ENCODE measurements at regions of chr14 and their contacts with region 1.

Region 1: GRCh38 chr14:61503167-61503801 is 181.9 kb downstream of the PRKCH start:
- DNase-seq: peak in 9 of 10 donors; percentile 38 to 83 (median 70)
- ATAC-seq: peak; percentile 85 to 90
- H3K4me3 Mint-ChIP-seq: peak overlapping the region; percentile 62 to 84 (median 78)
- H3K27ac Mint-ChIP-seq: peak overlapping the region in 9 of 10 donors; percentile 92 to 98 (median 97)
- H3K4me1 Mint-ChIP-seq: peaks cover 48 to 100% (median 96%) of the 10 kb centered on the region in 4 donors
- H3K27me3 Mint-ChIP-seq: no peaks in the 10 kb centered on the region

Region 2: DNA sequence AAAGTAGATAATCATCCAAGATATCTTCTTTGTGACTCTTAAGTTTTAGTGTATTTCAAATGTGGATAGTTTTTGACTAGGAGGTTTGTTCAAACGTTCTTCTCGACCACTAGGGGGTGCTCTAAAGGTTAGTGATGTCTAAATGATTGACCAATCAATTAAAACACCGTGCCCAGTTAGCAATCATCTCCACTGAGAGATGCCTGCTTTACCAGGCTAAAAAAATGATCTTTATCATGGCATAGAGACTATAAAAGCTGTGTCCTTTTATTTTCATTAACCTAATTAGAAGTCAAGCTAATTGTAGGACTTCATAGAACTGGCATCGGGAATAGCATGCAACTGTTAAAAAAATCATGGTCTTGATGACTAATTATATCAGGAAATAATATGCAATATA is 28.0 kb before region 1 on chr14:
- POLR2A ChIA-PET with region 1: interaction called, 21 read pairs
- DNase-seq: peak in 2 of 10 donors; percentile 37 to 45
- ATAC-seq: no peak
- H3K4me3 Mint-ChIP-seq: peak overlapping the region in 9 of 10 donors; percentile 25 to 81 (median 61)
- H3K27ac Mint-ChIP-seq: peak overlapping the region in 9 of 10 donors; percentile 93 to 100 (median 99)
- H3K4me1 Mint-ChIP-seq: peaks cover 53 to 96% (median 93%) of the 10 kb centered on the region in 4 donors
- H3K27me3 Mint-ChIP-seq: no peaks in the 10 kb centered on the region

Region 3: DNA sequence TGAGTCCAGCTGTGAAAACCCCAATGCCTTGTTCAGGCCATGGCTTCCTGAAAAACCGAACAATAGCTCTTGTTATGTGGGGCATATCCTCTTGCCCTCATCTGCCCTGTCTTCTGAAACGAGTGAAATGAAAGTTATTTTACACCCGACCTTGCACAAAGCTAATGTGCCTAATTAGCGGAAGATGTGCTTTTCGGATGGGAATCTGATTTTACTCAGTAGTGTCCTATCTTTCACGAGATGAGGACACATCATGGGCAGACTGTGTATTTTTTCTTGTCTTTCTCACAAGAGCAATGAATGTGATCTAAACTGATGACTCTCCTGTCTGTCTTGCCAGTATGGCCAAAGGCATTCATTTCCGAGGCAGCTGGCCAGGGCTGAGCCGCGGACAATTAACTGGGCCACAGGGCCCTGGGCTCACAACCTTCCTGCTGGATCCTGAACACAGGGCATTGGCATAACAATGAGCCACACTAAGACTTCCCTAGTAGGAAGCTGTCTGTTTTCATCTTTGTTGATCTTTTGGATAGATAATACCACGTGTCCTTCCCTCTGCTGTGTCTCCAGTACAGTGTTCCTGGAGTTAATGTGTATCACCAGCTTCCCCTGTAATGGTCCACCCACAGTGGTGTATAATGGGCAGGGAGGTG is 106.0 kb after region 1 on chr14:
- POLR2A ChIA-PET with region 1: no interaction called
- DNase-seq: no peak
- ATAC-seq: no peak
- H3K4me3 Mint-ChIP-seq: no peak overlapping the region
- H3K27ac Mint-ChIP-seq: no peak overlapping the region
- H3K4me1 Mint-ChIP-seq: peaks cover 5 to 22% (median 10%) of the 10 kb centered on the region in 4 donors
- H3K27me3 Mint-ChIP-seq: no peaks in the 10 kb centered on the region